ENCODE measurements at regions of chr22 and their contacts with region 1.

Region 1: DNA sequence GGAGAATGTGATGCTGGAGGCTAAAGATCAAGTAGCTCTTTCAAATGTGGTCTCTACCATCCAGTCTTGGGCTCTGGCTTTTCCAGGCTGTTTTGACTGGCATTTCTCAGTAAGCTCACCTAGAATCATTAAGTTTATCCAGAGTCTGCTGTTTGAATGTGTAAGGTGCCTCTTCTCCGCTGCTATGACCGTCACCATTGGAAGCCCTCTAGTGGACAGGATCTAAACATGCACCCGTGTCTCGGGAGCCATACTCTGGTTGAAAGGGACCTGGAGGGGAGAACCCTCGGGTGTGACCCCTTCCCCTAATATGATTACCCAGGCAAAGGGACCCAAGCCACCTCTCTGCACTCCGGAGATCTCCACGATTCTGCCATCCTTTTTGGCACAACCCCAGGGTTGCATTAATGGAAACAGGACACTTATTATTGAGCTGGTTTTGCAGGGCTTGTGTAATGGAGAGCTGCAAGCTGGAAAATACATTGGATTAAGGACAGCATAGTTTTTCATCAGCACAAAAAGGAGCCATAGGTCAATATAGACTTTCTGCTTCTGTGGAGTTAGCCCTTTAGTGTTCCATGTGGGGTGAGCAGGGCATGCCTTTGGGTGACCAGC is 191.0 kb upstream of the LARGE1 start:
- H3K4me3 ChIP-seq: no peak overlapping the region
- H3K27ac ChIP-seq: no peak overlapping the region
- H3K4me1 ChIP-seq: peaks cover 4% of the 10 kb centered on the region; the same call in 1 of the 2 replicates
- CTCF ChIP-seq: no peak

Region 2: GRCh38 chr22:34017205-34017604 is 94.1 kb before region 1 on chr22:
- CTCF ChIA-PET with region 1: no interaction called
- POLR2A ChIA-PET with region 1: no interaction called
- H3K4me3 ChIP-seq: no peak overlapping the region
- H3K27ac ChIP-seq: no peak overlapping the region
- H3K4me1 ChIP-seq: no peaks in the 10 kb centered on the region
- CTCF ChIP-seq: no peak

Region 3: GRCh38 chr22:34055525-34056200 is 55.7 kb before region 1 on chr22:
- CTCF ChIA-PET with region 1: interaction called, 10 read pairs
- POLR2A ChIA-PET with region 1: no interaction called
- H3K4me3 ChIP-seq: no peak overlapping the region
- H3K27ac ChIP-seq: no peak overlapping the region
- H3K4me1 ChIP-seq: no peaks in the 10 kb centered on the region
- CTCF ChIP-seq: no peak

Region 4: GRCh38 chr22:34122042-34122441 is 10.7 kb after region 1 on chr22:
- CTCF ChIA-PET with region 1: interaction called, 14 read pairs
- POLR2A ChIA-PET with region 1: no interaction called
- H3K4me3 ChIP-seq: no peak overlapping the region
- H3K27ac ChIP-seq: no peak overlapping the region
- H3K4me1 ChIP-seq: no peaks in the 10 kb centered on the region
- CTCF ChIP-seq: no peak

Measured in HEK293 (cell line).